Naive thymus-derived CD8-positive, alpha-beta T cell (primary cell): ENCODE measurements at regions of chr11 and their contacts with region 1.

Region 1: DNA sequence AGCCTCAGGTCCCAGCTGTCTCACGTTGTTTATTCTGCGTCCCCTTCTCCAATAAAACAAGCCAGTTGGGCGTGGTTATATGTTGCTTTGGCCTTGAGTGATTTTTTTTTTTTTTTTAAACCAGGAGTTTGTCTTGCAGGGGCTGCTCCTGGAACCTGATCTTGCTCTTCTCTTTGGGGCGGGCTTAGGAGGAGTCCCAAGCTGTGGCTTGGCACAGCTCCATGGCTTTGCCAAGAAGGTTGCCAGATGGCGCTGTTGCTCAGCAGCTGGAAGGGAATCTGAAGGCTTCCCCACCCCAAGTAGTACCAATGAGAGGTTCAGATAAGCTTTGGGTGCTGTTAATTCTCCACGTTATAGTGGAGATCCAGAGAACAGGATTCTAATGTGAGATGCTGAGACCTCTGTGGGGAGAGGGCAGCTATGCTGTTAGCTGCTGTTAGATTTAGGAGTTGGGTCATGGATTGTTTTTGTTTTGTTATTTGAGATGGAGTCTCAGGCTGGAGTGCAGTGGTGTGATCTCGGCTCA is 2.0 kb upstream of the FERMT3 start:
- DNase-seq: peak; percentile 73 to 92 (median 84)
- ATAC-seq: peak; percentile 66 to 67
- H3K4me3 Mint-ChIP-seq: peak overlapping the region; percentile 48 to 88 (median 76)
- H3K27ac Mint-ChIP-seq: peak overlapping the region; percentile 82 to 95 (median 92)
- H3K4me1 Mint-ChIP-seq: peaks cover 22 to 50% (median 48%) of the 10 kb centered on the region in 4 donors
- H3K27me3 Mint-ChIP-seq: no peaks in the 10 kb centered on the region

Region 2: DNA sequence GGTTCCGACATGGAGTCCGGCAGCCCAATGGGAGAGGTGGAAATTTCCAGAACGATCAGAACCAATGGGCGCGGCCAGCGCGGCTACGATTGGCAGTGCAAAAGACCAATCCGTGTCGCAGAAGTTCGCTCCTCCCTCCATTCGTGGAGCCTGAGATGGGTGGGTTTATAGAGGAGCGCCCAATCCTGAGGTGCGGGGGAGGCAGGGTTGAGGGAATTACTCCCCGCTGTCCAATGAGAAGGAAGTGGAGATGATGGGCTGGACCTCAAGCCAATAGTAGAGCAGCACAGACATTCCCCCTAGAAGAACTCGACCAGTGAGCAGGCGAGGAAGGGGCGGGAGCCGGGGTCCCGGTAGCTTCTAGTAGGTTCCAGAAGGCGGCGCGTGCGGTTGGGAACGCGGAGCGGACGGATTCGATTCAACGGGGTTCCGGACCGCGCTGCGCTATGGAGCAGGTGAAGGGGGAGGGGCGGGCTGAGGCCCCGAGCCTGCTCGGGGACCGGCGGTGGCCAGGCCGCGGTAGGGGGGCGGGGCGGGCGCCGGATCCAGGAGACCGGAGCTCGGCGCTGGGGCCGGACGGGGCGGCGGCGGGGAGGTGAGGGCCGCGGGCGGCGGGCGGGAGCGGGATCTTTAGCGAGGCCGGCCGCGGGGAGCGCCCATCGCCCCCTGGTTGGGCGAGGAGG is 18.6 kb before region 1 on chr11 and contains the start of gene STIP1:
- POLR2A ChIA-PET with region 1: interaction called, 58 read pairs
- DNase-seq: peak; percentile 93 to 100 (median 99)
- ATAC-seq: peak; percentile 90 to 91
- H3K4me3 Mint-ChIP-seq: peak within 1 kb of the TSS in 8 of 10 donors; percentile 96 to 100 (median 98)
- H3K27ac Mint-ChIP-seq: peak within 1 kb of the TSS; percentile 91 to 99 (median 96)
- H3K4me1 Mint-ChIP-seq: peaks cover 23 to 55% (median 47%) of the 10 kb centered on the region in 4 donors
- H3K27me3 Mint-ChIP-seq: peaks cover 0 to 2% (median 0%) of the 10 kb centered on the region in 5 donors
- polyA plus RNA-seq, gene STIP1: 59.4 to 132 (median 66.2) TPM

Region 3: GRCh38 chr11:64216879-64217278 is 12.4 kb after region 1 on chr11:
- POLR2A ChIA-PET with region 1: interaction called, 290 read pairs
- DNase-seq: peak in 1 of 10 donors; percentile 24
- ATAC-seq: peak; percentile 63 to 75
- H3K4me3 Mint-ChIP-seq: no peak overlapping the region
- H3K27ac Mint-ChIP-seq: peak overlapping the region in 5 of 10 donors; percentile 40 to 86 (median 71)
- H3K4me1 Mint-ChIP-seq: peaks cover 7 to 29% (median 25%) of the 10 kb centered on the region in 4 donors
- H3K27me3 Mint-ChIP-seq: no peaks in the 10 kb centered on the region

Region 4: DNA sequence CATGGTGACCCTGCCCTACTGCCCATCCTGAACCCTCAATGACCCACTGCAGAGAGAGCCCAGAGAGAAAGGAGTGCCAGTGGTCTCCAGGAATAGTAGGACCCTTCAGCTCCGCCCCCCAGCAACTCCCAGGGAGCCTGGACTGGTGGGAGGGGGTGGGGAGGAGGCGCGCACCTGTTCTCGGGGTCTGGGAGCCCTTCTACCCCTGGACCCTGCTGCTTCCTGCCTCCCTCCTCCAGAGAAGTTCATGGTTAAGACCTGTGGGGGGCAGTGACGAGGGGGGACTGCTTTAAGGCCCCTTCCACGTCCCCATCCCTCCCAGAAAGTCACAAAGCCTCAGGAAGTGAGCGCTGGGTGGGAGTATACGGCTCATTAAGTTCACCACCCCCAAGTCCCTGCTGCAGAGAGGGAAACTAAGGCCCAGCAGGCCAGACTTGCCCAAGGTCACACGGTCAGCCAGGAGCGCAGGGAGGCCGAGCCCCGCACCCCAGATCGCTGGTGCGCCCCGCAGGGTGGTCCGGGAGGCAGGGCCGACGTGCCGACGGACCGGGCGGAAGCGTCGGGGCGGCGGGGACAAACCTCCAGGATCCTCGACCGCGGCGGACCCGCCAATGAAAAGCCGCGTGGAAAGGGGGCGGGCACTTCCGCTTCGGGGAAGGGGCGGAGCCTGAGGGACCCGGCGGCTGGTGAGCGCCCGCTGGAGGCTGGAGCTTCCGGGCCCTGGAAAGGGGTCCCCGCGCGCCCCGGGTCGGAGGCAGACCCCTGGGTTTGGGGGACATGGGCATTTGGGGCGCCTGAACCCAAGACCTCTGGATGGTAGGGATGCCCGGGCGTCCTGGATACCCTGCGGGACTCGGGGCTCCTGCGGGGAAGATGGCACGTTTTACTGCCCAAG is 21.3 kb after region 1 on chr11 and contains the starts of genes NUDT22 and TRPT1:
- POLR2A ChIA-PET with region 1: interaction called, 290 read pairs
- DNase-seq: peak; percentile 80 to 93 (median 85)
- ATAC-seq: peak; percentile 69 to 71
- H3K4me3 Mint-ChIP-seq: peak within 1 kb of the TSS; percentile 87 to 95 (median 90)
- H3K27ac Mint-ChIP-seq: peak within 1 kb of the TSS; percentile 83 to 97 (median 92)
- H3K4me1 Mint-ChIP-seq: peaks cover 17 to 41% (median 33%) of the 10 kb centered on the region in 4 donors
- H3K27me3 Mint-ChIP-seq: no peaks in the 10 kb centered on the region
- polyA plus RNA-seq, gene NUDT22: 43.4 to 50.4 (median 48.2) TPM
- polyA plus RNA-seq, gene TRPT1: 47.2 to 54.2 (median 51.4) TPM

Region 5: DNA sequence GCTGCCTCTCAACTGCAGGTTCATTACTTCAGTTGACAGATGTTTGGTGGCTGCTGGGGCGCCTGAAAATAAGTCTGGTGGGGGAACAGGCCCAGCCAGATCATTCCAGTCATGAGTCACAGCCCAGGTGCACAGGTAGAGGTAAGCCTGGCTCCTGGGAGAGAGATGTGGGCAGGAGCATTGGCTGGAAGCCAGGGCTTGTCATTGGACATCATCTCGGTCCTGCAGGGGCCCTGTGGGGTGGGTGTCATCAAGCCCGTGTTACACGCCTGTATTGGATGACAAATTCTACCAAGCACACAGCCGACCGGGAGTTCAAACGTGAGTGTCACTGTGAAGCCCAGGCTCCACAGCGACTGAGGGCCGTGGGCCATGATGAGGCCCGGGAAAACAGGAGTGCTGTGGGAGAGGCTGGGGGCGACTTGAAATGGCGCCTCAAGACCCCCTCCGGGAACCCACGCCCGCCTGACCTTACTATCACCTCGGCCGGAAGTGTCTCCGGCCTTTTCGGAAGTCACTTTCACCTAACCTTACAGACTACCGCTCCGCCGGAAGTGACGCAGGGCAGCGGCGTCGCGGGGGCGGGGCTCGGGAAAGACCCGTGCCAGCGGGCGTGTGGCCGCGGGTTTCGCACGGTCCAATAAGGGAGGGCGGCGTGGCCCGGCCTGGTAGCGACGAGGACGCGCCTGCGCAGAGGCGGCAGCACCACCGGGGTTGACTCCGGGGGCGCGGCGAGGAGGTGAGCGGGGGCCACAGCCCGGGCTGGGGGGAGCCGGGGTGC is 36.1 kb after region 1 on chr11 and contains the start of gene FKBP2:
- POLR2A ChIA-PET with region 1: interaction called, 290 read pairs
- DNase-seq: peak; percentile 96 to 99 (median 98)
- ATAC-seq: peak; percentile 73 to 75
- H3K4me3 Mint-ChIP-seq: peak within 1 kb of the TSS; percentile 86 to 96 (median 93)
- H3K27ac Mint-ChIP-seq: peak within 1 kb of the TSS; percentile 96 to 100 (median 99)
- H3K4me1 Mint-ChIP-seq: peaks cover 12 to 47% (median 40%) of the 10 kb centered on the region in 4 donors
- H3K27me3 Mint-ChIP-seq: no peaks in the 10 kb centered on the region
- polyA plus RNA-seq, gene FKBP2: 84.9 to 91.8 (median 85.5) TPM

Region 6: GRCh38 chr11:64284048-64284961 is 79.8 kb after region 1 on chr11 and contains the start of gene BAD:
- POLR2A ChIA-PET with region 1: interaction called, 37 read pairs
- DNase-seq: peak; percentile 86 to 96 (median 88)
- ATAC-seq: peak; percentile 78 to 79
- H3K4me3 Mint-ChIP-seq: peak within 1 kb of the TSS; percentile 85 to 94 (median 90)
- H3K27ac Mint-ChIP-seq: peak within 1 kb of the TSS; percentile 74 to 99 (median 97)
- H3K4me1 Mint-ChIP-seq: peaks cover 8 to 29% (median 21%) of the 10 kb centered on the region in 4 donors
- H3K27me3 Mint-ChIP-seq: no peaks in the 10 kb centered on the region
- polyA plus RNA-seq, gene BAD: 39.1 to 44.8 (median 39.9) TPM

Region 7: DNA sequence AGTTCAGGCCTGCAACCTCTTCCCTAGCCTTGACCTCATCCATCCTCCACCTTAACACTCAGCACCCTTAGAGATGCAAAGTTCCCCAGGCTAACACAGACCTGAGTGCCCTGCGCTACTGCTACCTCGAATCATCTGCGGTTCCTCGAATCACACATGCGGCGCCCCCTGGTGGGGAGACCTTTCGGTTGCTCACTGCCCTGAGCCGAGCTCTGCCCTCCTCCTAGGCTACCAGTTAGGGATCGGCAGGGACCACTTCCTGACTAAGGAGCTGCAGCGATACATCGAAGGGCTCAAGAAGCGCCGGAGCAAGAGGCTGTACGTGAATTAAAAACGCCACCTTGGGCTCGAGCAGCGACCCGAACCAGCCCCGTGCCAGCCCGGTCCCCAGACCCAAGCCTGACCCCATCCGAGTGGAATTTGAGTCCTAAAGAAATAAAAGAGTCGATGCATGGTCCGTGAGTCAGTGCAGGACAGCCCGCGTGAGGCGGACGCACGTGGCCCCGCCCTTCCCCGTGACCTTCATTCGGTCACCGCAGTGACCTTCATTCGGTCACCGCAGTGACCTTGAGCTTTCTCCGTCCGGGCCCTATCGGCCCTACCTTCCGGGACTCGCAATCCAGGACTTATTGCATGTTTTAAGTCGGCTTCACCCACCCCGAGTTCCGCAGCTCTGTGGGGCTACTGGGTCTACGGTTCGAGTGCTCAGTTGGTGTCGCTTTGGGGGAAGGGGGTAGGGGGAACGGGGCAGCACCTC is 100.0 kb after region 1 on chr11:
- POLR2A ChIA-PET with region 1: interaction called, 113 read pairs
- DNase-seq: peak; percentile 83 to 95 (median 90)
- ATAC-seq: peak; percentile 33 to 39
- H3K4me3 Mint-ChIP-seq: peak overlapping the region; percentile 85 to 97 (median 93)
- H3K27ac Mint-ChIP-seq: peak overlapping the region; percentile 87 to 98 (median 95)
- H3K4me1 Mint-ChIP-seq: peaks cover 22 to 47% (median 43%) of the 10 kb centered on the region in 4 donors
- H3K27me3 Mint-ChIP-seq: peaks cover 12 to 18% (median 14%) of the 10 kb centered on the region in 5 donors